ENCODE measurements at regions of chr1 and their contacts with region 1.

Region 1: DNA sequence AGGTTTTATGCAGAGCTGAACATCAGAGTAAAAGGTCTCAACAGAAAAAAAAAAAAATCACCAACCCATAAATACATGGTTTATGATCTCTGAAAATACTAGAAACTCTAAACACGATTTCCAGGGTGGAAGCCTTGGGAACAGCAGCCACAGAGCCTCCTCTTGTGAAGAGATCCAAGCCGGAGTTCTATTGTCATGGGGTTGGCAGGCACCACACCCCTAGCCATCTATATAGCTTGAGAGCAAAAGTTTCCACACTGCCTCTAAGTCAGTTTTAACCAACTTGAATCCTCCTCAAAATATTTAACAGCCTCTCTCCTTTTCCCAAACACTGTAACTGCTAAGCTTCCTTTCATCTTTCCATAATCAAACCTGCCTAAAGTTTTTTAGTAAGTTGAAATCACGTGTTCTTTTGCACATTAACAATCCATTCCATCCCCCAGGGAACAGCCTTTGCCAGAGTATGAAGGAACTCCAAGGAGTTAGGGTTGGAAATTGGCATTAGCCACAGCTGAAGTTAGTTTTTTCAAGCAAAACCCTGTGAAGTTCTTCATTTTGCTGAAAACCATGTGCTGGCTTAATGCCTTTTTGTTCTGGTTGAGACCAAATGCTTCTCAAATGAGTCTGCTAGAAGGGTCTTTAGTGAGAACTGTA is 13.8 kb upstream of the SEC16B start:
- DNase-seq: no peak
- H3K4me3 Mint-ChIP-seq: no peak overlapping the region
- H3K27ac Mint-ChIP-seq: no peak overlapping the region
- H3K4me1 Mint-ChIP-seq: no peaks in the 10 kb centered on the region
- H3K27me3 Mint-ChIP-seq: no peaks in the 10 kb centered on the region
- CTCF ChIP-seq: no peak

Region 2: GRCh38 chr1:177710696-177711620 is 272.7 kb before region 1 on chr1:
- CTCF ChIA-PET with region 1: no interaction called
- POLR2A ChIA-PET with region 1: no interaction called
- intact Hi-C with region 1: no loop called
- DNase-seq: no peak
- H3K4me3 Mint-ChIP-seq: no peak overlapping the region
- H3K27ac Mint-ChIP-seq: no peak overlapping the region
- H3K4me1 Mint-ChIP-seq: no peaks in the 10 kb centered on the region
- H3K27me3 Mint-ChIP-seq: no peaks in the 10 kb centered on the region
- CTCF ChIP-seq: no peak

Region 3: DNA sequence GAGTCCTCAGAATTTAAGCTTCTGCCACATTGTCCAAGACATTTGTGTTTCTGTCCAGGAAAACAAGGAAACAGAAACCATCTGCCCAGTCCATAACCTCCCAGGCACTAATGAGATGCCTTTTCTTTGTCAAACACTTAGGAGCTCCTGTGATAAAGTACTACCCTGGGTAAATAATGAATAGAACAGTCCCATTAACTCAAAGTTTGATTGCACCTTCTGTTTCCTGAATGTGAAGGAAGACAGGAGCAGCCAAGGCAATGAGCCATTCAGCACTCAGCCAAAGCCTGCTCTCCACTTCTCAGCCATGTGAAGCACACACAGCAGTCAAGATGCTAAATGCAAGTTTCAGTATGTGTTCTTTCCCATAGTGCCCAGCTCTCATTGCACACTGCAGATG is 213.5 kb before region 1 on chr1:
- CTCF ChIA-PET with region 1: no interaction called
- POLR2A ChIA-PET with region 1: no interaction called
- intact Hi-C with region 1: no loop called
- DNase-seq: no peak
- H3K4me3 Mint-ChIP-seq: no peak overlapping the region
- H3K27ac Mint-ChIP-seq: no peak overlapping the region
- H3K4me1 Mint-ChIP-seq: no peaks in the 10 kb centered on the region
- H3K27me3 Mint-ChIP-seq: peaks cover 14% of the 10 kb centered on the region
- CTCF ChIP-seq: no peak

Region 4: GRCh38 chr1:178006047-178006446 is 22.4 kb after region 1 on chr1:
- CTCF ChIA-PET with region 1: interaction called, 8 read pairs
- POLR2A ChIA-PET with region 1: no interaction called
- intact Hi-C with region 1: loop called (anchors 2 kb)
- DNase-seq: no peak
- H3K4me3 Mint-ChIP-seq: no peak overlapping the region
- H3K27ac Mint-ChIP-seq: no peak overlapping the region
- H3K4me1 Mint-ChIP-seq: peaks cover 9% of the 10 kb centered on the region
- H3K27me3 Mint-ChIP-seq: no peaks in the 10 kb centered on the region
- CTCF ChIP-seq: no peak